Heart right ventricle (tissue), 16 donors: ENCODE measurements at regions of chr12 and their contacts with region 1.

Region 1: DNA sequence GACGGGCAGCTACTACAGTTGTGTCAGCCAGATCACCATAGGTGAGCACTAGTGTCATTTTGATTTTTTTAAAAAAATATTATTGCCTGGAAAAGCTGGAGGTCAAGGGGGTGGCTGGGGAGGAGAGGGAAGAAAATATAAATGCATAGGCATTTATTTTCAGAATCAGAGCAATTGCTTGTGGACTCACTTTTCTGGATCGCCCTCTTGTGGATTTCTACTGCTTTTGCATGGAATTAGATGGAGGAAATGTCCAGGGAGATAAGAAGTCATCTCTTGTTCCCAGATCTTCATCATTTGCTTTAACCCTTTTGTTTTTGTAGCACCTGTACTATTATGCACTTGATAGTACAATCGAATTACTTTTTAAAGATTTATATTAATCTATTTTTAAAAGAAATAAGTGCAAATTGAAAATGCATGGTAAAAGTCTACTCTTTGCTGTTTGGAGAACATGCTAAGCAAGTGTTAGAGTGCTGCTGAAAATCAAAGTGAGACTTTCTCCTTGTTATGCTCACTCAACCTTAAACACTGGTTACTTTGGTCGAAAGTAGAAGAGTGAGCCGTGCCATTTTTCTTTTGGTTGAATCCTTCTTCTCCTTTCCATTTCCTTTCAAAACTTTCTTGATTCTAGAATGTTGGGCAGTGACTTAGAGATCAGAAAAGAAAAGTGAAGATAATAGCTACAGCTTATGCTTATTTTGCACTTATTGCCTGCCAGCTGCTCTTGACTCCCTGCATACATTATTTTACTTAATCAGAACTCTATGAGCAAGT is 60.6 kb upstream of the ANO4 start:
- DNase-seq: no peak
- ATAC-seq: no peak
- H3K4me3 ChIP-seq: no peak overlapping the region
- H3K27ac ChIP-seq: no peak overlapping the region
- H3K4me1 ChIP-seq: no peaks in the 10 kb centered on the region
- H3K27me3 ChIP-seq: peaks cover 0 to 29% (median 16%) of the 10 kb centered on the region in 7 donors
- CTCF ChIP-seq: peak in 6 of 9 donors; percentile 19 to 60 (median 50)

Region 2: DNA sequence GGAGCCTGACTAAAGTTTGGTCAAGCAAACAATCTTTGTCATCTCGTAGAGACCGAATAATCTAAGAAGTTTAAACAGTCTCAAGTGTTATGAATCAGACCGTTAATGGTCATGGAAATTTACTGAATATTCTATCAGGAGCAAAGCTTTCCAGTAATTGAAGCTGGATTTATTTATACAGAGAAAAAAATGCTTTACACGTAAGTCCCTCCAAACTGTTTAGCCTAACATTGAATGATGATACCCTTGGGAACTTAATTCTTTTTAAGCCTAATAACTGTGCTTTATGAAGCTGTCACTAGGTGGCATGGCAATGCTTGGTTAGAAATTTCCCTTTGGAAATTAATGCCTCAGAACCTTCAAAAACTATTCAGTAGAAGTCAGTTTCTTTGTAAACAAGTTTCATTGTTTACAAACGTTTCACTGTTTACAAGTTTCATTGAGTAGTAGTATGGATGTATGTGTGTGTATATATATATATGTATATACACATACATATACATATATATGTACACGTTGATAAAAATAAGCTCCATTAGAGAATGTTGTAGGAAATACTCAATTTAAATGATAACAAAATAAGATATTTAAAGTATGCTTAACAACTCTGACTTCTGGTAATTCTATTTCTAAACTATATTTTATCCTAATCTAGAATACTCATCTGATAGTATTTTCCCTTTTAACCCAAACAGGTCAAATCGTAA is 499.3 kb before region 1 on chr12:
- intact Hi-C with region 1: loop called in 6 of 10 experiments (anchors 2 to 5 kb)
- DNase-seq: no peak
- ATAC-seq: peak in 7 of 8 donors; percentile 13 to 79 (median 63)
- H3K4me3 ChIP-seq: no peak overlapping the region
- H3K27ac ChIP-seq: peak overlapping the region in 4 of 10 donors; percentile 17 to 36 (median 28)
- H3K4me1 ChIP-seq: no peaks in the 10 kb centered on the region
- H3K27me3 ChIP-seq: no peaks in the 10 kb centered on the region
- CTCF ChIP-seq: peak; percentile 61 to 90 (median 81)

Region 3: GRCh38 chr12:100348657-100349454 is 385.1 kb before region 1 on chr12:
- intact Hi-C with region 1: loop called in 6 of 10 experiments (anchors 5 to 10 kb)
- DNase-seq: no peak
- ATAC-seq: peak in 2 of 8 donors; percentile 42 to 50
- H3K4me3 ChIP-seq: no peak overlapping the region
- H3K27ac ChIP-seq: no peak overlapping the region
- H3K4me1 ChIP-seq: no peaks in the 10 kb centered on the region
- H3K27me3 ChIP-seq: peaks cover 0 to 4% (median 0%) of the 10 kb centered on the region in 7 donors
- CTCF ChIP-seq: peak in 7 of 9 donors; percentile 21 to 63 (median 50)

Region 4: GRCh38 chr12:100356644-100357223 is 377.3 kb before region 1 on chr12 and contains the start of gene SLC17A8:
- intact Hi-C with region 1: loop called in 4 of 10 experiments (anchors 5 to 10 kb)
- DNase-seq: no peak
- ATAC-seq: no peak
- H3K4me3 ChIP-seq: no peak within 1 kb of the TSS
- H3K27ac ChIP-seq: no peak within 1 kb of the TSS
- H3K4me1 ChIP-seq: peaks cover 0 to 25% (median 6%) of the 10 kb centered on the region in 9 donors
- H3K27me3 ChIP-seq: peaks cover 0 to 19% (median 15%) of the 10 kb centered on the region in 7 donors
- CTCF ChIP-seq: no peak
- total RNA-seq, gene SLC17A8: 0.08 to 0.17 TPM in 2 of 10 donors, not detected in the others

Region 5: GRCh38 chr12:100573292-100574186 is 160.5 kb before region 1 on chr12 and contains the start of gene GAS2L3:
- intact Hi-C with region 1: loop called in 1 of 10 experiments (anchors 10 kb)
- DNase-seq: peak; percentile 87 to 91
- ATAC-seq: peak; percentile 99 to 100 (median 100)
- H3K4me3 ChIP-seq: peak within 1 kb of the TSS; percentile 55 to 79 (median 65)
- H3K27ac ChIP-seq: peak within 1 kb of the TSS in 9 of 10 donors; percentile 41 to 88 (median 70)
- H3K4me1 ChIP-seq: peaks cover 0 to 31% (median 17%) of the 10 kb centered on the region in 9 donors
- H3K27me3 ChIP-seq: peaks cover 0 to 5% (median 0%) of the 10 kb centered on the region in 7 donors
- CTCF ChIP-seq: no peak
- total RNA-seq, gene GAS2L3: 1.3 to 5.6 (median 2.0) TPM

Region 6: GRCh38 chr12:100672075-100672592 is 61.9 kb before region 1 on chr12:
- intact Hi-C with region 1: no loop called
- DNase-seq: peak in 1 of 2 donors; percentile 15
- ATAC-seq: no peak
- H3K4me3 ChIP-seq: no peak overlapping the region
- H3K27ac ChIP-seq: no peak overlapping the region
- H3K4me1 ChIP-seq: no peaks in the 10 kb centered on the region
- H3K27me3 ChIP-seq: peaks cover 0 to 15% (median 7%) of the 10 kb centered on the region in 7 donors
- CTCF ChIP-seq: peak in 7 of 9 donors; percentile 14 to 62 (median 38)

Region 7: GRCh38 chr12:100883237-100883636 is 149.2 kb after region 1 on chr12:
- intact Hi-C with region 1: no loop called
- DNase-seq: no peak
- ATAC-seq: no peak
- H3K4me3 ChIP-seq: no peak overlapping the region
- H3K27ac ChIP-seq: no peak overlapping the region
- H3K4me1 ChIP-seq: no peaks in the 10 kb centered on the region
- H3K27me3 ChIP-seq: no peaks in the 10 kb centered on the region
- CTCF ChIP-seq: no peak